ENCODE measurements at regions of chr12 and their contacts with region 1.

Region 1: DNA sequence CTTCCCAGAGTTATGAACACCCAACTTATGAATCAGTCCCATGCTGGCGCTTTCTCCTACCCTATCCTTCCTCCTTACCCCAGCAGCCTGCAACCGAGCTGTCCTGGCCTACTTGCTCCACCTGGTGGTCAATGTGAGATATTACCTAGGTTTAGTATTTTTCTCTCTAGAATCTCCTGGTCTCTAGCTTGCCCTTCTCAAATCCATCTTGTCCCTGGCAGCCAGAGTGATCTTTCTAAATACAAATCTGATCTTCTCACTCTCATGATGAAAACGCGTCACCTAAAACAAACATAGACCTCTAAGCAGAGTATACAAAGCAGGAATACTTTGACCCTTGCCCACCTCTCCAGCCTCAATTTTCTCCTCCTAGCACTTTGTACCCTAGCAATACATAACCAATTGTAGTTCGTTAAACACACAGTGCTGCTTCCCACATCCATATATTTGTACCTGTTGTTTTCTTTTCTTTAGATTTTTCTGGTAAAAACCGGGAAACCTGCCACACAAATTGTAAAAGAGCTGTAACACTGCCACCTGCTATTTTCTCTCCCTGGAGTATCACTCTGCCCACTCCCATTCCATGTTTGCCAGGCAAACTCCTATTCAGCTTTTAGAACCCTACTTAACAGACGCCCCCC is 20.0 kb upstream of the TCP11L2 start:
- DNase-seq: no peak
- H3K4me3 ChIP-seq: no peak overlapping the region
- H3K27me3 ChIP-seq: peaks cover 2% of the 10 kb centered on the region
- CTCF ChIP-seq: peak; percentile 77

Region 2: DNA sequence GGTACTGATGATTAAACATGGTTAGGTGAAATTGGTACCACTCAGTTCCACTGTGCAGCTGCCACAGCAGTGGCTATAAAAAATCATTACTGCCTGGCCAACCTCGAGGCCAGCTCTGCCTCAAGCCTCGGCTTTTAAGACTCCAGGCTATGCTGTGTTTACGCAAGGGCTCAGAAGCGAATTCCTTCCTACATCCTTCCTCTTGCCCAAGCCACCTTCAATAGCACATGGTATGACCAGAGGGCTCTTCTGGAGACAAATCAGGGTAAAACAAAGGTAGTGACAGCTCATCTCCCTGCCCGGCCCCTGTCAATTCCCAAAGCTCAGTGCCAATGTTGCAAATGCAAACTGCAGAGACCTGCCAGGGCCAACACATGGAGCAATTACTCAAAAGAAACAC is 175.7 kb before region 1 on chr12:
- CTCF ChIA-PET with region 1: no interaction called
- POLR2A ChIA-PET with region 1: no interaction called
- DNase-seq: no peak
- H3K4me3 ChIP-seq: no peak overlapping the region
- H3K27me3 ChIP-seq: no peaks in the 10 kb centered on the region
- CTCF ChIP-seq: no peak

Region 3: DNA sequence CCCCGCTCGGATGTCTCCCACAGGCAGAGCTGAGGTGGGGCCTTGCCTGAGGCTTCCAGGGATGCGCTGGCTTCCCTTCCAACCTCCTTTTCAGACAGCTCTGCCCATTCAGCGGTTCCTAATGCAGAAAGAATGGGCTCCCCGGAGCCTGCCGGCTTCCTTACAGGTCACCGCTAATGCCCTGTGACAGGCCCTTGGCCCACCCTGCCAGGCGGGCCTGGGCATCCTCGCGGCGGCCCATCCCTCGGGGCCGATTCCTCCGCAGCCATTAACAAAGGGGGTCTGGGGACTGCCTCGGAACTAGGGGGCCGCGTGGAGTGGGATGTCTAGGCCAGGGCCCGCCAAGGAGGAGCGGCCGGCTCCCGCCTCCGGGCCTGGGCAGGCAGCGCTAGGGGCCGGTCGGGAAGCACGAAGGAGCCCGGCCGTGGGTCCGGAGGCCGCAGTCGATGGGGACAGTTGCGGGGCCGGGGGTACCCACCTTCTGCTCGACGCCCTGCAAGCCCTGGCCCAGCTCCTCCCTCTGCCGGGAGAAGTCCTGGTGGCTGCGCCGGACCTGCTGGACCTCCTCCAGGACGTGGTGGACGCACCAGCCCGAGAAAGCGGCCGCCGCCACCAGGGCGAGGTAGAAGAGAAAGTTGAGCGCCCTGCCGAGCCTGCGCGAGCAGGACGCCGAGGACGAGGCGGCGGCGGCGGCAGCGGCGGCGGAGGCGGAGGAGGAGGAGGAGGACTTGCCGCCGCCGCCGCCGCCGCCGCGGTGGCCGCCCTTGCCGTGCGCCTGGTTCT is 35.5 kb before region 1 on chr12:
- CTCF ChIA-PET with region 1: interaction called, 10 read pairs
- POLR2A ChIA-PET with region 1: no interaction called
- DNase-seq: no peak
- H3K4me3 ChIP-seq: peak overlapping the region; percentile 82
- H3K27me3 ChIP-seq: no peaks in the 10 kb centered on the region
- CTCF ChIP-seq: 0 out of 2 replicates have a peak, but pooled peaks have one; percentile 7